Dendritic cell treated with granulocyte-macrophage colony-stimulating factor and Interleukin-4, amounts not matched to agents 40 ng/mL and 50 ng/mL, for 4 days (primary cell): ENCODE measurements at regions of chr17 and their contacts with region 1.

Region 1: DNA sequence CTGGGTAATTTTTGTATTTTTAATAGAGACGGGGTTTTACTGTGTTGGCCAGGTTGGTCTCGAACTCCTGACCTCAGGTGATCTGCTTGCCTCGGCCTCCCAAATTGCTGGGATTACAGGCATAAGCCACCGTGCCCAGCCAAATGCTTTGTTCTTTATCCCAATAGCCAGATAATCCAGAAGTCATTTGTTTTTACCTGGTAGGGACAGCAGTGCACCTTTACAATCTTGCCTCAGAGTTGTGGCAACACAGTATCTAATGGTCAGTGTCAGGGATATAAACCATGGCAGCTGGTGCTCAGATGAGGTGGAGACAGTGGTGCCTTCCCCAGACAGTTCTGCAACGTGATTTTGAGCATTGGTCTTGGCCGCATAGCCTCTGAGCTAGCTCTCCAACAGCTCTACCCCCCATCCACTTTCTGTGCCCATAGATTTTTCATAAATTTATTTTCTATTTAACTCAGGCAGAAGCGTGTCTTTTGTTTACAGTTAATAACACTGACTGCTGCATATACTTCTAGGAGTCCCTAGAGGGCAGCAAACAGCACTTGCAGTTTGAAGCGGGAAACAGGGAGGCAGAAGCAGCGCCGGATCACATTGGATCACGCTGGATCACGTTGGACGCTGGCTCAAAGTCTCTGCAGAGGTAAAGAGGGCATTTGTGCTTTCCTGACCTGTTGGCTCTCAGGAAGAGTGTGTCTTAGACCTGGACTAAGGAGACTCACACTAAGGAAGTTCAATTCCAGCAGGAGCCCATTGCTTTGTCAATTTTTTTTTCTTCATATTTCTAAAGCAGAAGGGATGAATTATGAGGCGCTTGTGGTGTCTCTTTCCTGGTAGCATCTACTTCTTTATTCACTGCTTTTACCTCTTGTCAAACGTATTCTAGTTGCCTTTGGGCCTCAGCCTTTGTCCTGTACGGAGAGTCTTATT is 5.1 kb upstream of the GGT6 start:
- H3K4me3 Mint-ChIP-seq: no peak overlapping the region
- H3K27ac Mint-ChIP-seq: no peak overlapping the region
- H3K4me1 Mint-ChIP-seq: peaks cover 30% of the 10 kb centered on the region
- H3K27me3 Mint-ChIP-seq: peaks cover 12% of the 10 kb centered on the region

Region 2: DNA sequence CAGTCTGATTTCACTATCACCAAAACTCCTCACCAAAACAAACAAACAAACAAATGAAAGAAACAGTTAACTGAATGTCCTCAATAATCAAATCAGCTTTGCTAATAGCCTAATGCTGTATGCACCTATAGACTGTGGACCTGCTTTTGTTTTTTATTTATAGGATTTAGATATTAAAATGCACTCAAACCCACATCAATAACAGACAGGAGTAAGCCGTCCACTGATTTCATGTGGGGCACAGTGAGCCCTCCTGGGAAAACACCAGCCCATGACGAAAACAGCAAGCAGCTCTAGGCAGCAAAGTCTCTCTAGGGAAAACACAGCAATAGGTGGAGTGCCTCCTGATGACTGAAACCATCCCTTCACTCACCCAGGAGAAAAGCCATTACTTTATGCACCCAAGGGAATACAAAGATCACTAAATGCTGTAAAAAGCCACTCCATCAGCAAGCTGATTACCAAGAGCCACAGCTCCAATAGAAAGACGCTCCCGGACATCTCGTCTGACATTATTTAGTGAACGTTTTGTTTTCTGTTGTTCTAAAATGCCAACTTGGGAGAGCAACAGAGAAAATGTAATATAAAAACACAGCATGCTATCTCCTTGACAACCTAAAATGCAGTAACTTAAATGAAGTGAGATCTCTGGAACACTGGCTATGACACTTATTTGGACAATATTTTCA is 349.4 kb before region 1 on chr17:
- intact Hi-C with region 1: no loop called
- H3K4me3 Mint-ChIP-seq: no peak overlapping the region
- H3K27ac Mint-ChIP-seq: peak overlapping the region; percentile 57
- H3K4me1 Mint-ChIP-seq: peaks cover 22% of the 10 kb centered on the region
- H3K27me3 Mint-ChIP-seq: peaks cover 19% of the 10 kb centered on the region

Region 3: DNA sequence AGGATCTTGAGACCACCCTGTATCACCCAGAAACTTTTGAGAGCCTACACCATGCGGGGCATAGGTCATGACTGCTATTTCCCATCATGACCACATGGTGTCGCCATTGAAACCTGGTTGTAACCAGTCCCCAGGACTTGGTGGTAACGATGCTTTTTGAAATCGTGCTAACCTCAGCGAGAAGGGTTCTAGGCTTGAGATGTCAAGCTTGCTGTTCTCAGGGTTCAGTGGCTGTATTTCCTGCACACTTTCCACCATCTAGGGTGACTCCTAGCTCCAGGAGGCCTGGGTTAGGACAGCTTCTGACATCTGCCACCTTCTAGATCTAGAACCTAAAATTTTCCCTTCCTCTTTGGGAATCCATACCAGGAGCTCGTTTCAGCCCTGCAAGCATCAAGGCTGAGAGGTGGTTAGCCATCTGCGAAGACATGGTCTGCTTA is 144.8 kb before region 1 on chr17:
- intact Hi-C with region 1: loop called (anchors 10 kb)
- H3K4me3 Mint-ChIP-seq: no peak overlapping the region
- H3K27ac Mint-ChIP-seq: no peak overlapping the region
- H3K4me1 Mint-ChIP-seq: peaks cover 21% of the 10 kb centered on the region
- H3K27me3 Mint-ChIP-seq: peaks cover 6% of the 10 kb centered on the region

Region 4: GRCh38 chr17:4626734-4627256 is 61.3 kb after region 1 on chr17:
- intact Hi-C with region 1: loop called (anchors 1 kb)
- H3K4me3 Mint-ChIP-seq: no peak overlapping the region
- H3K27ac Mint-ChIP-seq: peak overlapping the region; percentile 27
- H3K4me1 Mint-ChIP-seq: peaks cover 51% of the 10 kb centered on the region
- H3K27me3 Mint-ChIP-seq: no peaks in the 10 kb centered on the region